ENCODE measurements at regions of chr3 and their contacts with region 1.

Region 1: GRCh38 chr3:137032465-137033120 is 74.8 kb downstream of the IL20RB start:
- DNase-seq: peak in 1 of 2 experiments; percentile 80
- H3K4me3 ChIP-seq: no peak overlapping the region
- H3K27ac ChIP-seq: no peak overlapping the region
- H3K4me1 ChIP-seq: no peaks in the 10 kb centered on the region
- H3K27me3 ChIP-seq: no peaks in the 10 kb centered on the region
- CTCF ChIP-seq: peak; percentile 93

Region 2: DNA sequence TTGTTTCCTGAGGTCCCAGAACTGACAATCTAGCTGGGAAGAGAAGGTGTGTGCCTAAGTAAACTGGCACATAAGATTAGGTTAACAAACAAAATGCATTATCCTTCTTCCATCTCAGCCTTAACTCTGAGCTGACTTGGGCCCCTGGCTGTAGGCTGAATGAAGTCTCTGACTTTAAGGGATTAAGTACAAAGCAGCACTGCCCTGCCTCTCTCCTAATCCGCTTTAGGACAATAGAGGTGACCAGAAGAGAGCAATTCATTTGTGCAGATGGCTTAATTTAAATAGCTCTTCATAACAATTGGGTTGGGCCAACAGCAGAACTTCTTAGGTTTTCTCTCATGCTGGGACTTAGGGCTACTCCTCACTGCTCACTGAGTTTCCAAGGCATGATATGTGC is 549.9 kb after region 1 on chr3:
- CTCF ChIA-PET with region 1: no interaction called
- POLR2A ChIA-PET with region 1: no interaction called
- intact Hi-C with region 1: no loop called
- DNase-seq: no peak
- H3K4me3 ChIP-seq: no peak overlapping the region
- H3K27ac ChIP-seq: no peak overlapping the region
- H3K4me1 ChIP-seq: no peaks in the 10 kb centered on the region
- H3K27me3 ChIP-seq: no peaks in the 10 kb centered on the region
- CTCF ChIP-seq: no peak

Region 3: GRCh38 chr3:137946345-137946973 is 913.9 kb after region 1 on chr3:
- CTCF ChIA-PET with region 1: interaction called, 3 read pairs
- POLR2A ChIA-PET with region 1: no interaction called
- intact Hi-C with region 1: loop called (anchors 1 kb)
- DNase-seq: peak; percentile 48 to 58
- H3K4me3 ChIP-seq: no peak overlapping the region
- H3K27ac ChIP-seq: no peak overlapping the region
- H3K4me1 ChIP-seq: no peaks in the 10 kb centered on the region
- H3K27me3 ChIP-seq: 0 out of 2 replicates have a peak, but pooled peaks cover 9% of the 10 kb centered on the region
- CTCF ChIP-seq: peak; percentile 88

Region 4: GRCh38 chr3:137970914-137971831 is 938.6 kb after region 1 on chr3:
- CTCF ChIA-PET with region 1: no interaction called
- POLR2A ChIA-PET with region 1: no interaction called
- intact Hi-C with region 1: loop called (anchors 2 kb)
- DNase-seq: peak; percentile 47 to 72
- H3K4me3 ChIP-seq: no peak overlapping the region
- H3K27ac ChIP-seq: no peak overlapping the region
- H3K4me1 ChIP-seq: no peaks in the 10 kb centered on the region
- H3K27me3 ChIP-seq: peaks cover 15% of the 10 kb centered on the region; the same call in 1 of the 2 replicates
- CTCF ChIP-seq: peak; percentile 86

Region 5: GRCh38 chr3:138051946-138052802 is 1019.6 kb after region 1 on chr3:
- CTCF ChIA-PET with region 1: no interaction called
- POLR2A ChIA-PET with region 1: no interaction called
- intact Hi-C with region 1: loop called (anchors 2 kb)
- DNase-seq: peak in 1 of 2 experiments; percentile 50
- H3K4me3 ChIP-seq: no peak overlapping the region
- H3K27ac ChIP-seq: no peak overlapping the region
- H3K4me1 ChIP-seq: no peaks in the 10 kb centered on the region
- H3K27me3 ChIP-seq: no peaks in the 10 kb centered on the region
- CTCF ChIP-seq: peak; percentile 77

Region 6: GRCh38 chr3:138479438-138479863 is 1446.9 kb after region 1 on chr3:
- CTCF ChIA-PET with region 1: no interaction called
- POLR2A ChIA-PET with region 1: no interaction called
- intact Hi-C with region 1: no loop called
- DNase-seq: no peak
- H3K4me3 ChIP-seq: no peak overlapping the region
- H3K27ac ChIP-seq: no peak overlapping the region
- H3K4me1 ChIP-seq: no peaks in the 10 kb centered on the region
- H3K27me3 ChIP-seq: no peaks in the 10 kb centered on the region
- CTCF ChIP-seq: peak; percentile 66